Posterior cingulate gyrus (tissue), 11 donors: ENCODE measurements at regions of chr6 and their contacts with region 1.

Region 1: DNA sequence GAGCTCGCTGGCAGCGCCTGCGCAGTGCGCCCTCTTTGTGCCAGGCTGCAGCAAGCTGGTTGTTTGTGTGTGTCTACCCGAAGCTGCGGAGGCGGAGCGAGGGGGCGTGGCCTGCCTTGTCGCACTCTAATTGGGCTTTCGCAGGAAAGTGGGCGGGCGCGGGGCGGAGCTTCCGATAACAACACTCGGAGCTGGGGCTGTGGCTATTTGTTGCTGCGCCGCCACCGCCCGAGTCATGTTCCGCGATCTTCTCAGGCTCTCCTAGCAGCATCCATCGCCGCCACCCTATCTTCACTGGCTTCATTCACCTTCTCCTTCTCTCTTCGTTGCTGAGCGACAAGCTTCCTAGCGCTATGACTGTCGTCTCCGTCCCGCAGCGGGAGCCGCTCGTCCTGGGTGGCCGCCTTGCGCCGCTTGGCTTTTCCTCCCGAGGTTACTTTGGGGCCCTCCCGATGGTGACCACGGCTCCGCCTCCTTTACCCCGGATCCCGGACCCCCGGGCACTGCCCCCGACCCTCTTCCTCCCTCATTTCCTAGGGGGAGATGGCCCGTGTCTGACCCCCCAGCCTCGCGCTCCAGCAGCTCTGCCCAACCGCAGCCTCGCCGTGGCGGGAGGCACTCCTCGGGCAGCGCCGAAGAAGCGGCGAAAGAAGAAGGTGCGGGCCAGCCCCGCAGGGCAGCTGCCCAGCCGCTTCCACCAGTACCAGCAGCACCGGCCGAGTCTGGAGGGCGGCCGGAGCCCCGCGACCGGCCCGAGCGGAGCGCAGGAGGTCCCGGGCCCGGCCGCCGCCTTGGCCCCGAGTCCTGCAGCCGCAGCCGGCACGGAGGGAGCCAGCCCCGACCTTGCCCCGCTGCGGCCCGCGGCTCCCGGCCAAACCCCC is at the start of gene PNRC1:
- DNase-seq: peak; percentile 100

Region 2: DNA sequence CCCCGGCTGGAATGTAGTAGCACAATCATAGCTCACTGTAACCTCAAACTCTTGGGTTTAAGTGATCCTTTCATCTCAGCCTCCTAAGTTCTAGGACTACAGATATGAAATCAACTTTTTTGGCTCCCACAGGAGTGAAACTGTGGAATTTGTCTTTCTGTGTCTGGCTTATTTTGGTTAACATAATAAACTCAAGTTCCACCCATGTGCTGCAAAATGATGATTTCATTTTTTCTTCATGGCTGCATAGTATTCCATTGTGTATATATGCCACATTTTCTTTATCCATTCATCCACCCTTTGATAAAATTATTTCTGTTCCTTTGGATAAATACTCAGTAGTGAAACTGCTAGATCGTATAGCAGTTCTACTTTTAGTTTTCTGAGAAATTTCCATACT is 147.3 kb before region 1 on chr6:
- intact Hi-C with region 1: no loop called
- DNase-seq: no peak

Region 3: GRCh38 chr6:88952065-88952973 is 128.5 kb before region 1 on chr6:
- intact Hi-C with region 1: no loop called
- DNase-seq: no peak

Region 4: DNA sequence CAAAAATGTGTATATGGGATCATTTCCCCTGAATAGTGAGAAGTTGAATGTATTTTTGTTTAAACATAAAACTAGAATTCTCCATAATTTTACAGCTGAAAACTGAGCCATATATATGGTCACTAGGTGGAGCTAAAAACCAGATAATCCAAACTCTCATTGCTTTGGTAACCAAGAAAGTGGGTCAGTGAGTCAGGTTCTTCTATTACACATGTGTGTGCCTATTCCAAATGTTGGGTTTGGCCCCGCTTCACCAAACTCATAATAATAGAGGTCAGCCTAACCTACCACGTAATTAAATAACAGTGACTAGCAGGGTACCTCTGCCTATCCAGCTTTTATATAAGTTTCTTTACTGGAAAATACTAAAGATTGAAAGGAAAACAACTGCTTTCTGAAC is 98.1 kb before region 1 on chr6:
- intact Hi-C with region 1: loop called (anchors 5 kb)
- DNase-seq: no peak

Region 5: DNA sequence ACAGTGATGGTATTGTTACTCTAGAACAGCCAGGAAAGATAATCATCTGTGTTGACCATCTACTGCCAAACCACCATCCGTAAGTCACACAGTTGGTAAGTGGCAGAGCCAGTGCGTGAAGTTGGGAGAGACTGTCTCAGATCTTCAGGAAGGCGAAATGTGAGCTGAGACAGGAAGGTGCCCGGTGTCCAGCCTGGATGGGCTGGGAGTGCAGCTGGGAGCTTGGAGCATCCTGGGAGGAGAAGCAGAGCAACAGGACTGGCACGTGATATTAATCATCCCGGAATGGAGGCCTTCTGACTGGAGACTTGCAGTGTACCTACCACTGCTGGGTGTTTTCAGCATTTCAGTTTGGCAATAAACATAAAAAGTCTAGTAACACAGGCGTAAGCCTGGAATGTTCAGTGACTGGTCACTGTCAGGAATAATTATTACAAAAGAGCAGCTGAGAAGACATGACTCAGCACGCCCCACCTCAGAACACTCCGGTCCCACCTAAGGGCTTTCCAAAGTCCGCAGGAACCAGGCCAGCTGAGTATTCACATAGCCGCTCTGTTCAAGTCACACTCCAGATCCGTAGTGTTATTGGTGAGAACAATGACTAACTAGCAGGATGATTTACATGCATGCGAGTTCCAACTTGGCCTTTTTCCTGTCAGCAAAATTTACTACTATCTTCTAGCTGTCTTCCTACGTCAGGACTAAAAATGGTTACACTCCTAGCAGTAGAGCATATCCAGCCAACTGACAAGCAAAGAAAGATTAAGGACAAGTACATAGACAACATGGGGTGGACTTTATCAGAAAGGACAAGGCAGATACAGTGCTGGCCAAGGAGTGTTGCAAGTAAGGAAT is 45.3 kb before region 1 on chr6:
- intact Hi-C with region 1: loop called (anchors 5 kb)
- DNase-seq: peak in 5 of 10 donors; percentile 42 to 88 (median 55)

Region 6: DNA sequence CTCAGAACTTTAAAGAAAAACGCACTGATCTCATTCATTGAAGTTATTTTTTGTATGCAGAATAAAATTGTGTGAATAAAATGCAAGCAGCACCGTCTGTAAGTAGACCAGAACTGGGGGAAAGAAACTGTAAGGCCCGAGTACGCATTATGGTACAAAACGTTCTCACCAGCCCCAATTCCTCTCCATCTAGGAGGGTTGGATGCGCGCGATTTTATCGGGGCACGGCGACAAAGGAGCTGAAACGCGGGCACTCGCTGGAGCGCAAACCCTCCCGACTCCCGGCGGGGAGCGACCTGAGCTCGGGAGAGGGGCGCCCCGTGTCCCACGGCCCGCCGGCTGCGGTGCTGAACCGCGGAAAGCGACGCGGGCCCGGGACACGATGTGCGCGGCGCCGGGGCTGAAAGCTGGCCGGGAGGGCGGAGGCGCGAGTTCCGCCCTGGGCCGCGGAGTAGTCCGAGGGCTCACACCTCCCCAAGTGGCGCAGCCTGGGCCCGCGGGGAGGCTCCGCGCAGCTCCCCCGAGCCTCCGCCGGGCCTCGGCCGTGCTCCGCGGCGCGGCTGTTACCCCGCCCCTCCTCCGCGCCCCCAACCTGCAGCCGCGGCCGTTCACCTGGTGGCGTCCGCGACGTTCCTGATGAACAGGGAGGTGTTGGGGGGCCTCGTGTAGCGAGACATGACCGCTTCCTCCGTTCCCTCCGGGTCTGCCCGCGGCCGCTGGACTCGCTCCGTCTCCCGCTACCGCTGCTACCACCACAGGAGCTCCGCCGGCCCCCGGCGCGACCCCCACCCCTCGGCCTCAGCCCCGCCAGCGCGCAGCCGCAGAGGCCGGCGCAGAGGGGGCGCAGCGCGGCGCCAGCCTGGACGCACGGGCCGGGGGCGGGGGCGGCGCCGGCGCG is 36.7 kb after region 1 on chr6 and contains the start of gene SRSF12:
- intact Hi-C with region 1: loop called (anchors 5 kb)
- DNase-seq: peak in 8 of 10 donors; percentile 13 to 87 (median 31)

Region 7: DNA sequence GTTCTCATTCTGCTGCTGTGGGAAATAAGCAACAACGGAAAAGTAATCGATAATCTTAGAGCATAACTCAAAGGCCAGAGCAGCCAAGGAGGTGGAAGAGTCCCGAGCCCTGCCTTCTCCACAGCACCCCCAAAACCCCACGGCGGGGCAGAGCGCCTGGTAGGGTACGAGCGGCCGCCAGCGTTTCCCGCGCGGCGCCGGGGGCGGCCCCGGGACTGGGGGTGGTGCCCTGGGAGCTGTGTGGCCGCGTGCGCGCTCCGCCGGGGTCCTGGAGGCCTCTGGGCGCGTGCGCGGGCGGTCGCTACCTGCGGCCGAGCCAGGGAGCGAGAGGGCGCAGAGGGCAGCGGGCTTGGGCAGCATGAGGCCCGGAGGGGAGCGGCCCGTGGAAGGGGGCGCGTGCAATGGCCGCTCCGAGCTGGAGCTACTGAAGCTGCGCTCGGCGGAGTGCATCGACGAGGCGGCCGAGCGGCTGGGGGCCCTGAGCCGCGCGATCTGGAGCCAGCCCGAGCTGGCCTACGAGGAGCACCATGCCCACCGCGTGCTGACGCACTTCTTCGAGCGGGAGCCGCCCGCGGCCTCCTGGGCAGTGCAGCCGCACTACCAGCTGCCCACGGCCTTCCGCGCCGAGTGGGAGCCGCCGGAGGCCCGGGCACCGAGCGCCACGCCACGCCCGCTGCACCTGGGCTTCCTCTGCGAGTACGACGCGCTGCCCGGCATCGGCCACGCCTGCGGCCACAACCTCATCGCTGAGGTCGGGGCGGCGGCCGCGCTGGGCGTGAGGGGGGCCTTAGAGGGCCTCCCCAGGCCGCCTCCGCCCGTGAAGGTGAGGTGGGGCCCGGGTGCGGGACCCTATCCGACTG is 65.2 kb after region 1 on chr6 and contains the start of gene PM20D2:
- intact Hi-C with region 1: loop called (anchors 2 kb)
- DNase-seq: peak; percentile 32 to 93 (median 50)

Region 8: GRCh38 chr6:89352278-89353117 is 271.7 kb after region 1 on chr6 and contains the start of gene UBE2J1:
- intact Hi-C with region 1: loop called (anchors 5 kb)
- DNase-seq: peak; percentile 73 to 98 (median 86)

Region 9: DNA sequence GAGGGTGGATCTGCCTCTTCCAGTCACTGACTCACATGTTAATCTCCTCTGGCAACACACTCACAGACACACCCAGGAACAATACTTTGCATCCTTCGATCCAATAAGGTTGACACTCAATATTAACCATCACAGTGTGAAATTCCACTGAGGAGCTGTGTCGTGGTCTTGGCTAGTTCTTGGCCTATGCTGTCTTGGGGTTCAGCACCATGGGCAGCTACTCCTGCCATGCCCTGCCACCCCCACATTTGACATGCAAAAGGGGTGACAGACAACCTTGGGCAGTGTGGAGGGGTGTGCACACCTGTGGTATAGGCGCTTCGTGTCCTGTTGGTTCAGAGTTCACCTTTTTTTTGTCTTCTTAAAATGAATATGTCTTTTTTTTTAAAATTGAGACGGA is 377.9 kb after region 1 on chr6:
- intact Hi-C with region 1: no loop called
- DNase-seq: no peak